Common myeloid progenitor, CD34-positive (primary cell): ENCODE measurements at regions of chr18 and their contacts with region 1.

Region 1: GRCh38 chr18:36107477-36107876 is 21.7 kb downstream of the SLC39A6 start:
- DNase-seq: no peak
- H3K4me3 ChIP-seq: no peak overlapping the region
- H3K27ac ChIP-seq: no peak overlapping the region
- H3K4me1 ChIP-seq: no peaks in the 10 kb centered on the region
- H3K27me3 ChIP-seq: no peaks in the 10 kb centered on the region

Region 2: GRCh38 chr18:36095936-36096519 is 11.4 kb before region 1 on chr18:
- CTCF ChIA-PET with region 1: interaction called, 14 read pairs
- POLR2A ChIA-PET with region 1: no interaction called
- DNase-seq: peak; percentile 72 to 86 (median 82)
- H3K4me3 ChIP-seq: no peak overlapping the region
- H3K27ac ChIP-seq: no peak overlapping the region
- H3K4me1 ChIP-seq: peaks cover 0 to 14% (median 8%) of the 10 kb centered on the region in 4 experiments
- H3K27me3 ChIP-seq: no peaks in the 10 kb centered on the region